Activated T-helper 1 cell treated with anti-CD3 and anti-CD28 coated beads, Interleukin-12 subunit alpha, Interleukin-12 subunit beta, Interleukin-2, Interleukin-4 antibody, amounts not matched to agents 30 ng/mL and 10 ng/mL and 1 ng/mL, durations not matched to agents 14 hours and 24 hours and 36 hours (primary cell): ENCODE measurements at regions of chr3 and their contacts with region 1.

Region 1: GRCh38 chr3:69051756-69052471 is at the start of gene TMF1:
- DNase-seq: peak; percentile 96
- H3K4me3 Mint-ChIP-seq: peak within 1 kb of the TSS; percentile 97
- H3K27ac Mint-ChIP-seq: peak within 1 kb of the TSS; percentile 96
- H3K4me1 Mint-ChIP-seq: peaks cover 56% of the 10 kb centered on the region
- H3K27me3 Mint-ChIP-seq: peaks cover 1% of the 10 kb centered on the region
- total RNA-seq, gene TMF1: 43.0 and 43.1 TPM in 2 replicates

Region 2: GRCh38 chr3:69033470-69033869 is 18.4 kb before region 1 on chr3:
- intact Hi-C with region 1: loop called (anchors 1 kb)
- DNase-seq: no peak
- H3K4me3 Mint-ChIP-seq: no peak overlapping the region
- H3K27ac Mint-ChIP-seq: peak overlapping the region; percentile 34
- H3K4me1 Mint-ChIP-seq: peaks cover 18% of the 10 kb centered on the region
- H3K27me3 Mint-ChIP-seq: no peaks in the 10 kb centered on the region

Region 3: GRCh38 chr3:69065318-69065964 is 13.5 kb after region 1 on chr3:
- intact Hi-C with region 1: loop called (anchors 1 kb)
- DNase-seq: peak; percentile 16
- H3K4me3 Mint-ChIP-seq: peak overlapping the region; percentile 41
- H3K27ac Mint-ChIP-seq: peak overlapping the region; percentile 57
- H3K4me1 Mint-ChIP-seq: peaks cover 37% of the 10 kb centered on the region
- H3K27me3 Mint-ChIP-seq: no peaks in the 10 kb centered on the region